Breast epithelium (tissue), 4 donors: ENCODE measurements at regions of chr1 and their contacts with region 1.

Region 1: DNA sequence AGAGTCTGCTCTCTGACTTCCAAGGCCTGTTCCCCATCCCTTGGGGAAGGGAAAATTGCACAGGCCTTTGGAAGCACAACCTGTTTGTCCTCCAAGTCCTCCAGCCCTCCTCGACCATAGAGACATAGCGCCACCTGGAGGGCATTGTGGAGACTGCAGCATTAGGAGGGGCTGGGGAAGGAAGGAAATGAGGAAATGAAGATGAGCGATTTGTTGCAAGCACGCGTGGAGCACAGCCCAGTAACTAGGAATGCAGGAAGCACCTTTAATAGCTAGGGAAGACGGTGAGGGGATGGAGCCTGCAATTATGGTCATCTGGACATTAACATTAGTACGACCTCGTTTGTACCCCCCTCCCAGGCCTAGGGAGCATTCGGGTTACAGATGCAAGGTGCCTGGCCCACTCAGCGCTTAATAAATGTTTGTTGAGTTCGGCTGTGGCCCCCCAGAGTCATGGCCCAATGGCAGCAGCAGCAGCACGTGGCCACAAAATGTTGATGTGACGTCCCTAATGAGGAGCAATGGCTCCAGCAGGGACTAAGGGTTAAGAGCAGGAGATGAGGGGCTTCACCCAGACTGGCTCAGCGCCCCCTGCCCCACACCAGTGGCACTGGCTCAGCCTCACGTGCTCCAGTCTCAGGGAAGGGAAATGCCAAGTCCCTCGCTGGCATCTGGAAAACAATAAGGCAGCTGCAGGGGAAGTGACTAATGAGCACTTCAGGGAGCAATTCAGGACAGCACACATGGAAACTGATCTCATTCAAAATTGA is 8.0 kb upstream of the CAMK2N1 start:
- DNase-seq: peak; percentile 87 to 91
- H3K4me3 ChIP-seq: no peak overlapping the region
- H3K27ac ChIP-seq: peak overlapping the region in 1 of 2 donors; percentile 35
- H3K4me1 ChIP-seq: no peaks in the 10 kb centered on the region
- H3K27me3 ChIP-seq: no peaks in the 10 kb centered on the region
- CTCF ChIP-seq: peak; percentile 99
- POLR2A ChIP-seq: no peak

Region 2: GRCh38 chr1:20376880-20377494 is 117.0 kb before region 1 on chr1:
- intact Hi-C with region 1: loop called (anchors 10 kb)
- DNase-seq: no peak
- H3K4me3 ChIP-seq: no peak overlapping the region
- H3K27ac ChIP-seq: no peak overlapping the region
- H3K4me1 ChIP-seq: no peaks in the 10 kb centered on the region
- H3K27me3 ChIP-seq: peaks cover 0 to 4% of the 10 kb centered on the region in 2 donors
- CTCF ChIP-seq: peak; percentile 55 to 67 (median 57)
- POLR2A ChIP-seq: no peak